ENCODE measurements at regions of chr5 and their contacts with region 1.

Region 1: GRCh38 chr5:160188142-160189015 is 40.9 kb upstream of the FABP6 start:
- DNase-seq: peak; percentile 84 to 96
- H3K4me3 ChIP-seq: peak overlapping the region; percentile 43
- H3K4me3 Mint-ChIP-seq: peak overlapping the region; percentile 75
- H3K27ac Mint-ChIP-seq: peak overlapping the region; percentile 86
- H3K4me1 ChIP-seq: peaks cover 17% of the 10 kb centered on the region
- H3K4me1 Mint-ChIP-seq: peaks cover 23% of the 10 kb centered on the region
- H3K27me3 ChIP-seq: no peaks in the 10 kb centered on the region
- H3K27me3 Mint-ChIP-seq: no peaks in the 10 kb centered on the region
- CTCF ChIP-seq: peak in 1 of 2 experiments; percentile 11

Region 2: DNA sequence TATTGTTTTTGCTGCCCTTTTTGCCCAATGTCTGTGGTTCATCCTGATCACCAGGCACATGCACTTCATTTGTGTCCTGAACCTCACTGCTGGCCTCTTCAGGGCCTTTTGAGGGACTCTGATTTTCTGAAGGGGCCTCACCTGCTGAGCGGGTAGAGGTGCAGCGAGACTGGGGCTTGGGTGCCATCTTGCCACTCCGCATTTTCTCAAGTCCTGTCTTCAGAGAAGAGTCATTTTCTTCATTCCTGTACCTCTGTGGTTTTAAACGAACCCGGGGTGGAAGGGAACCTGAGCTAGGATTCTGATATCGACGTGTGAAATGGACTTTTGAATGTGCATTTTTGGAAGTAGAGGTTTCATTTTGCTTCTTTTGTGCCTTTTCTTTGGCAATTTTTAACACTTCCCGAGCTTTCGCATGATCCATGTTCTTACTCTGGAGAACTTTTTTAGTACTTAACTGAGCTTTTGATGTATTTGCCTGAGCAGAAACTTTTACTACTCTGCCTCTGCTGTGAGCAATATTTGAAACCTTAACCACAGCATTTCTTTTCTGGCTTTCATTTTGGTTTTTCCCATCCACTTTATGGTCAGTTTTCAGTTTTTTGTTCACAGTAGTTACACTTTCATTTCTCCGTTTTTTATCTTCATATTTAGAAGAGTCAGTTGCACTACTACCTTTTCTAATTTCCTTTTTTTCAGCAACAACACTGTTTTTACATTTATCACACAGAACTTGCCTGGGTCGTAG is 95.2 kb before region 1 on chr5:
- CTCF ChIA-PET with region 1: no interaction called
- POLR2A ChIA-PET with region 1: no interaction called
- intact Hi-C with region 1: no loop called
- DNase-seq: no peak
- H3K4me3 ChIP-seq: no peak overlapping the region
- H3K4me3 Mint-ChIP-seq: no peak overlapping the region
- H3K27ac Mint-ChIP-seq: no peak overlapping the region
- H3K4me1 ChIP-seq: no peaks in the 10 kb centered on the region
- H3K4me1 Mint-ChIP-seq: no peaks in the 10 kb centered on the region
- H3K27me3 ChIP-seq: no peaks in the 10 kb centered on the region
- H3K27me3 Mint-ChIP-seq: no peaks in the 10 kb centered on the region
- CTCF ChIP-seq: no peak

Region 3: DNA sequence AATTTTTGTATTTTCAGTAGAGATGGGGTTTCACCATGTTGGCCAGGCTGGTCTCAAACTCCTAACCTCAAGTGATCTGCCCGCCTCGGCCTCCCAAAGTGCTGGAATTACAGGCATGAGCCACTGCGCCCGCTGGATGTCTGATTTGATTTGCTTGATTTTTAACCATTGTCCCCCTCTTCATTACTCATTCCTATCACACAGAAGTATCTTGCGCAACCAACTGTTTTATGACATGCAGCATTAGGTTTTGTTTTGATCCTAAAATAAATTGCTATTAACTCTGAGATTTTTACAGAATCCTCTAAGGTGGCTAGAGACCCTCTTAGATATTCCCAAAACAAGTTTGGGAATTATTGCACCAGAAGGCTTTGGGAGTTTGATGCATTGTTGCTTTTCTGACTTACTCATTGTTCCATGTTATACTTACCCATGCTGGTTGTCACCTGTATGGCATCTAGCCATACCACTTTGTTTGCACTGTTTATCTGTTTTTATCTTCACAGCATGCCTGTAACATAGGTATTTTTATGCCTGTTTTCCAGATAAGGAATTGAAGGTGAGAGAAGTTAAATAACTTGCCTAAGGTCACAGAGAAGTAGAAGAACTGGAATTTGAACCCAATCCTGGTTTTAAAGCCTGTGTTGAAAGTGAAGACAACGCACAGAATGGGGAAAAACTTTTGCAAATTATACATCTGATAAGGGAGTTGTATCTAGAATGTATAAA is 33.2 kb before region 1 on chr5:
- CTCF ChIA-PET with region 1: no interaction called
- POLR2A ChIA-PET with region 1: interaction called, 8 read pairs
- intact Hi-C with region 1: loop called (anchors 1 kb)
- DNase-seq: peak; percentile 46 to 66
- H3K4me3 ChIP-seq: no peak overlapping the region
- H3K4me3 Mint-ChIP-seq: peak overlapping the region; percentile 38
- H3K27ac Mint-ChIP-seq: peak overlapping the region; percentile 90
- H3K4me1 ChIP-seq: peaks cover 22% of the 10 kb centered on the region
- H3K4me1 Mint-ChIP-seq: peaks cover 17% of the 10 kb centered on the region
- H3K27me3 ChIP-seq: no peaks in the 10 kb centered on the region
- H3K27me3 Mint-ChIP-seq: no peaks in the 10 kb centered on the region
- CTCF ChIP-seq: no peak

Region 4: DNA sequence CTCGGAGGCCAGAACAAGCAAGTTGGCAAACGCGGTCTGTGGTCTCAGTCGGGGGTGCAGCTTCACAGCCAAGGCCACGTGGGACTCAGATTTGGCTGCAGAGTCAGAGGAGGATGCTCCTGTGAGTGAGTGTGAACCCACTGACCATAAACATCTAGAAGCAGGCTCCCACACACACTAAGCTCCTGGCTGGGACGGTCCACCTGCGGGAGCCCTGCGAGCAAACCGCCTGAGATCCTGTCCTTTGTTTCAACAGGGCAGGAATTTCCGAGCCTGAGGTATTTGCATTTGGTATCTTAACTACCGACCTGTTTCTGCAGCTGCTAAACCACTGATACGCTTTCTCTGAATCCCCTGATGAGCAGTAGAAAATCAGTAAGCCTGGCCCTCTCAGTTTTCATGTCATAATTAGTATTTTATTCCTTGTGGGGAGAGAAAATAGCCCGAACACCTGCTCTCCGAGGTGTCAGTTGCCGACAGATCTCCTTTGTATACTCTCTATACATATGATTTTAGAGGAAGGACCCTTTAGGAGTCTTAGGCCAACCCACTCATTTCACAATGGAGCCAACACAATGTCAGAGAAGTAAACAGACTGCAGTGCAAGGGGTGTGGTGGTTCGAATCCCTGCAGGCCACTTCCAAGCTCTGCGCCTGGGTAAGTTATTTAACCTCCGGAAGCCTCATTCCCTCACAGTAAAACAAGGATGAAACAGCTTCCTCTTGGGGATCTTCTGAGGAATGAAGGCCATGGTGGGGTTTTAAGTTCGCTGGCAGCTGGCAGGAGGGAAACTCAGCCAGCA is 28.2 kb before region 1 on chr5:
- CTCF ChIA-PET with region 1: no interaction called
- POLR2A ChIA-PET with region 1: interaction called, 8 read pairs
- intact Hi-C with region 1: loop called (anchors 1 kb)
- DNase-seq: peak; percentile 83 to 90
- H3K4me3 ChIP-seq: no peak overlapping the region
- H3K4me3 Mint-ChIP-seq: peak overlapping the region; percentile 25
- H3K27ac Mint-ChIP-seq: peak overlapping the region; percentile 87
- H3K4me1 ChIP-seq: peaks cover 36% of the 10 kb centered on the region
- H3K4me1 Mint-ChIP-seq: peaks cover 22% of the 10 kb centered on the region
- H3K27me3 ChIP-seq: no peaks in the 10 kb centered on the region
- H3K27me3 Mint-ChIP-seq: no peaks in the 10 kb centered on the region
- CTCF ChIP-seq: no peak

Region 5: DNA sequence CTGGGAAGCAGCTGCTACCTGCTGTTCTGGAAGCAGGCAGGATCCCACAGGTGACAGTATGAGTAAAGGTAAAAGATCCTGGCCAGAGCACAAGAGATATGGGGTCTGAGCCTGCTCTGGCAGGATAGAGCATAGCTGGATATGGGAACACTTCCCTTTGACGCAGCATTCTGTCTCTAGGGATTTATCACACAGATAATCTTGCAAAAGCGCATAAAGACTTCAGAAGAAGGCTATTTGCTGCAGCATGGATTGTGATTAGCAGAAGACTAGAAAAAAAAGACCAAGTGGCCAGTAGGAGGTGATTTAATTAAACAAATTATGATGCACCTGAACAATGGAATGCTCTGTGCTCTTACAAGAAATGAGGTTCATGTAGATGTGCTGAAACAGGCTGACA is 16.7 kb before region 1 on chr5:
- CTCF ChIA-PET with region 1: no interaction called
- POLR2A ChIA-PET with region 1: no interaction called
- intact Hi-C with region 1: loop called (anchors 1 kb)
- DNase-seq: no peak
- H3K4me3 ChIP-seq: no peak overlapping the region
- H3K4me3 Mint-ChIP-seq: no peak overlapping the region
- H3K27ac Mint-ChIP-seq: no peak overlapping the region
- H3K4me1 ChIP-seq: peaks cover 26% of the 10 kb centered on the region
- H3K4me1 Mint-ChIP-seq: peaks cover 18% of the 10 kb centered on the region
- H3K27me3 ChIP-seq: no peaks in the 10 kb centered on the region
- H3K27me3 Mint-ChIP-seq: no peaks in the 10 kb centered on the region
- CTCF ChIP-seq: no peak

Region 6: GRCh38 chr5:160213537-160213936 is 25.2 kb after region 1 on chr5:
- CTCF ChIA-PET with region 1: no interaction called
- POLR2A ChIA-PET with region 1: no interaction called
- intact Hi-C with region 1: no loop called
- DNase-seq: no peak
- H3K4me3 ChIP-seq: no peak overlapping the region
- H3K4me3 Mint-ChIP-seq: no peak overlapping the region
- H3K27ac Mint-ChIP-seq: no peak overlapping the region
- H3K4me1 ChIP-seq: peaks cover 26% of the 10 kb centered on the region
- H3K4me1 Mint-ChIP-seq: peaks cover 22% of the 10 kb centered on the region
- H3K27me3 ChIP-seq: no peaks in the 10 kb centered on the region
- H3K27me3 Mint-ChIP-seq: no peaks in the 10 kb centered on the region
- CTCF ChIP-seq: no peak

Measured in Caco-2 (cell line).